OCI-LY7 (cell line): ENCODE measurements at regions of chr5 and their contacts with region 1.

Region 1: GRCh38 chr5:153613144-153613543 is 122.7 kb downstream of the GRIA1 start:
- DNase-seq: no peak
- H3K4me3 ChIP-seq: no peak overlapping the region
- H3K27ac ChIP-seq: no peak overlapping the region
- H3K4me1 ChIP-seq: peaks cover 27% of the 10 kb centered on the region
- CTCF ChIP-seq: no peak

Region 2: DNA sequence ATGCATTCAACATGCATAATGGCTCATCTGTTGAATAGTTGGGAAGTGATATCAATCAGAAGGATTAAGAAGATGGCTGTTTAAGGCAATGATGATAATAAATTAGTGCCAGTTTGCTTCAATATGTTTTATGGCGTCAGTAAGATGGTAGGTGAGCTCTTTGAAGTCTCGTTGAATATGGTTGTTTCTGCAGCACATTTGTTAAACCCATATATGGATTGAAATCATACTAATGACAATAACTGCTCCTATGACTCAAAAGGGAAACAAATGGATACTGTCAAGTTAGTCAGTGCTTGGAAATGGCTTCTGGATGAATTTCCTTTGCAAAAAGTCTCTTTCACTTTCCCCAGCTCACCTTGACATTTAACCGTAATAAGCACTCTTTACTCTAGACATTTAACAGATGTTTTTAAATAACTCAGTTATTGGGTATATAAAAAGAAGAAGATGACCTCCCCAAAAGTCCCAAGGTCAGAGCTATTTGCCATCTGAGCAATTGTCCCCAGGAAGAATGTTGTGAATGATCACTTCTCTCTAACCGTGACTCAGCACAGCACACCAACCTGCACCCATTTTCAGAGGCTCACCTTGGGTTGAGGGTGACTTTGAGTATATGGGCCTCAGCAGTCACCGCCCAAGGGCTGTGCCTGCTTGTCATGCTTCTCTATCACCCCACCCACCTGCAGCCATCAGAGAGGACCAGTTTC is 10.8 kb after region 1 on chr5:
- CTCF ChIA-PET with region 1: no interaction called
- POLR2A ChIA-PET with region 1: interaction called, 28 read pairs
- intact Hi-C with region 1: no loop called
- DNase-seq: peak; percentile 25
- H3K4me3 ChIP-seq: no peak overlapping the region
- H3K27ac ChIP-seq: no peak overlapping the region
- H3K4me1 ChIP-seq: peaks cover 54% of the 10 kb centered on the region
- CTCF ChIP-seq: no peak

Region 3: DNA sequence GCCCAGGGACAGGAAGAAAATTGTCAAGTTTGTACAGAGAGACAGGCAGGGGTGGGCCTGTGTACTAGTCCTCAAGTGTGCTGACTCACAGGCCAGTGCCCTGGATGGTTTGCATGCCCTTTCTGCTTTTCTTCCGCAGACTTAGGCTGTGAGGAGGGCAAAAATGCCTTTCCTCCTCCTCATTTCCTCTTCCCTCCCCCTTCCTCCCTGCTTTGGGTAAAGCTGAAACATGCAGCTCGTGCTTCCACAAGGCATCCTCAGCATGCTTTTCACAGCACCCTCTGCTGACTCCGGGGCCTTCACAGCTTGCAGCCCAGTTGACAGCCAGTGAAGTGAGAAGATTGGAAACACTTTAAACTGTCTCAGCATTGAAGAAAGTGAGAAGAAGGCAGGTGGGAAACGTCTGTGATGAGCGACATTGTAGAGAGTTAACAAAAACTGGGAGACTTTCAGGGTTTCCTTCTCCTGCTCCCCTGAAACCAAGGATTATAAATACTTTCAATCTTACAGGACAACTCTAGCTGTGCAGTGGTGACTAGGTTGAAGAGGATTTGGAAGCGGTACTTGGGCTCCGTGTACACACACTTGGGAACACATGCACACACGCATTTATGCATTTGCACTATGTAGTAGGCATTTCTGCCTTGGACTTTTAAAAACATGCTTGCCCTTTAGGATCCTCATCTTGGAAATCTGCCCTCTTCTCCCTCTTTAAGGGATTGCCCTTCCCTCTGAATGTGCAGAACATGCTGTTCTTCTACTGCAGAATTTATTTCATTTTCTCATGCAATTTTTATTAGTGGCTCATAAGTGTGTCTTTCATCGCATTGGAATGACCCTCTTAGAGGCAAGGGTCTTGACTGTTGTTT is 16.1 kb after region 1 on chr5:
- CTCF ChIA-PET with region 1: interaction called, 3 read pairs
- POLR2A ChIA-PET with region 1: interaction called, 28 read pairs
- intact Hi-C with region 1: no loop called
- DNase-seq: peak; percentile 72
- H3K4me3 ChIP-seq: no peak overlapping the region
- H3K27ac ChIP-seq: peak overlapping the region; percentile 28
- H3K4me1 ChIP-seq: peaks cover 69% of the 10 kb centered on the region
- CTCF ChIP-seq: peak; percentile 69

Region 4: GRCh38 chr5:153672347-153673090 is 59.4 kb after region 1 on chr5:
- CTCF ChIA-PET with region 1: no interaction called
- POLR2A ChIA-PET with region 1: no interaction called
- intact Hi-C with region 1: no loop called
- DNase-seq: no peak
- H3K4me3 ChIP-seq: no peak overlapping the region
- H3K27ac ChIP-seq: no peak overlapping the region
- H3K4me1 ChIP-seq: no peaks in the 10 kb centered on the region
- CTCF ChIP-seq: no peak